Activated T-helper 1 cell treated with anti-CD3 and anti-CD28 coated beads, Interleukin-12 subunit alpha, Interleukin-12 subunit beta, Interleukin-2, Interleukin-4 antibody, amounts not matched to agents 30 ng/mL and 10 ng/mL and 1 ng/mL, durations not matched to agents 14 hours and 24 hours and 36 hours (primary cell): ENCODE measurements at regions of chr5 and their contacts with region 1.

Region 1: DNA sequence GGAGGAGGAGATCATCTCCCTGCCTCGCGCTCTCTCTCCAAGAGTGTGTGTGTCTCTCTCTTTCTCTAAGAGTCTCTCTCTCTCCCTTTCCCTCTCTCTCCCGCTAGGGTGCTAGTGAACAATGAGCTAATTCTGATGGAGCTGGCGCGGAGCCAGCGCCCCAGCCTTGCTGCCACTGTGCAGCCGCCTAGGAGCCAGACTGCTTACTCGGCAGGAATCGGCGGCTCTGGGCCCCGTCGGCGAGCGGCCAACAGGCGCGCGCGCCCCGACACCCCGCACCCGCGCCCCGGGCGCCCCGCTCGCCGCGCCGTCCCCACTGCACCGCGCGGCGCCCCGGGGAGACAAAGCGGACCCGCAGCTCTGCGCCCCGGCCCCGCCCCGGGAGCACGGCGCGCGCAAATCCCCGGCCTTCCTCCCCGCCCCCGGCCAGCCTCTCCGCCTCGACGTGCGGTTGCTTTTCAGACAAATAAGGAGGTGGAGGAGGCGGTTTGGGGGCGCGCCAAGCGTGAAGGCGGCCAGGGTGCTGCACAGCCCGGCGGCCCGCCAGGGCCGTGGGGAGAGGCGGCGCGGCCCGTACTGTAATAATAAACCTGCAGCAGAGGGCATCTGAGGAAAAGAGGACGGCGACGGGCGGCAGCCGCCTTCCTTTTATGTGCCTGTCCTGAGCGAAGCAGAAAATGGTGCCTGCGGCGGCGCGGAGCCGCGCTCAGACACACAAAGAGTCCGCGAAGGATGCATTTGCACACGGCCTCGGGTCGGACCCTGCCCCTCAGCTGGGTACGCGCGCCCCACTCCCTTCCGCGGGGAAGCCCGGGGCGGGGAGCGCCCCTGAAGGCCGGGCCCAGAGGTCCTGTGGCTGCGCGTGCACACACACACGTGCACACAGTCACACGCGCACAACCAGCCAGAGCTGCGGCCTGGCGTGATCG is 625 bp upstream of the NREP start:
- DNase-seq: peak; percentile 84
- H3K4me3 Mint-ChIP-seq: peak overlapping the region; percentile 87
- H3K27ac Mint-ChIP-seq: peak overlapping the region; percentile 86
- H3K4me1 Mint-ChIP-seq: peaks cover 29% of the 10 kb centered on the region
- H3K27me3 Mint-ChIP-seq: peaks cover 4% of the 10 kb centered on the region

Region 2: DNA sequence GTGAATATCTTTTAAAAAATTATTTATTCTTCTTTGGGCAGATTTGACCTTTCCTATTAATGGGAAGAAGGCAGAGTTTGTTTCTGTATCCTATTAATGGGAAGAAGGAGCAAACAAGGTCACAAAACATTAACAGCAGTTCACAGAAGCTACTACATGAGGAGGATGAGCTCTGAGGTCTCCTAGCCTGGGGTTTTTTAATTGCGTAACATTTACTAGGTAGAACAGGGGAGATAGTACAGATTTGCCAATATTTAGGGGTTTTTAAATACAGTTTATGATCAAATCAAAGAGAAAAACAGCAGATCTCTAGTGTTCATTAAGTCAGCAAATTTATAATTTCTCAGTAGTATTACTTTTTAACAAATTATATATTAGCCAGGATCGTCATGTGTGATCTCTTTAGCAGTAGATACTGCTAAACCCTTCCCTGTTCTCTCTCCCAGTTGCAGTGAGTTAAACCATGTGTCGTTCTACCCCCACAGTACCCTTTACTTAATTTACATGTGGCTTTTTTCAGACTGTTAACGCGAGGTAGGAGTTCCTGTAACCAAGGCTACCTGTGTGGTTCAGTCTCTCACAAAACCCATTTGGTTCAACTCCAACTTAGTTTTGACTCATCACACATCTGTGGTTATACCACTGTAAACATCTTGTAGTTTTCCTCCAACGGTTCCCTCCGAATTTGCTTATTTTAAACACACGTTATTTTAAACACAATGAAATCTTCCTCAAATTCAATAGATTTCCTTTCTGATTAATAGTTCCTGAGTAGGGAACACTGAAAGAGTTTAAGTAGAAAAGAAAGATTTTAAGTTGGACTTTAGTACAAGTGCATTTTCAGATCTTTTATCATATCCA is 1005.5 kb before region 1 on chr5:
- intact Hi-C with region 1: loop called (anchors 5 kb)
- DNase-seq: peak; percentile 52
- H3K4me3 Mint-ChIP-seq: peak overlapping the region; percentile 64
- H3K27ac Mint-ChIP-seq: peak overlapping the region; percentile 92
- H3K4me1 Mint-ChIP-seq: peaks cover 60% of the 10 kb centered on the region
- H3K27me3 Mint-ChIP-seq: no peaks in the 10 kb centered on the region

Region 3: DNA sequence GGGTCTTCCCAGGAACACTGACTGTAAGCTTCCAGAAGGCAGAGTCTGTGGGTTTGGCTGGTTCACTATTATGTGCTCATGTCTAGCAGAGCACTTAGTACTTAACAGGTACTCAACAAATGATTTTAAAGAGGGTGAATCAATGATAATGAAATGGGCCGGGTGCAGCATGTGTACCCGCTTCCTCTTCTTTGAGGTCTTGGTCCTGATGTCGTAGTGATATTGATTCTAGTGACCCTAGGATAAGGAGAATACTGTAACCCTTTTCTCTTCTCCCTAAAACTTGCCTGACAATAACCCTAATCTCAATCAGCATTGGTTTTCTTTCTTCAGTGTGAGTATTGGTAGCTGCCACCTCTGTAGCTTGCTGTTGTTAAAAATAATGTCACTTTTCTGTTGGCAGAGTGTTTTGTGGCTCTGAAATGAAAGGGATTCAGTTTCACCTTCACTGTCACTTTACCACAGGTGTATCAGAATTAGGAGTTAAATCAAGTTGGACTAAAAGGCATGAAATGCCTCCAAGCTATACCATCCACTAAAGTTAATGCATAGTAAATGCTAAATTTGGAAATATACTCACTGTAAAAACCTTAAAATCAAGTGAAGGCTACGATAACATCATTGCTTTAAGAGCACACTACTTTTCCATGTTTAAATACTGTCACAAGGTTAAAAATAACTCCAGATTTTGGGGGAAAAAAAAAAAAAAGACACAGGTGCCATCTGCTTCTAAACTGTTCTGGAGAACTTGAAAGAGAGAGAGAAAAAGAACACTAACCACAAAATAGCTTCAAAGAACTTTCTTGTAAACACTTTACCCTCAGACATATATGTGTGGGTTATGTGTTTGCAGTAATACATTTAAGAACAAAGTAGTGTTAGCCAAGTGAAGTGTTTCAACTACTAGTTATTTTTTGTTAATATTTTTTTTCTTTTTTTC is 527.5 kb before region 1 on chr5:
- intact Hi-C with region 1: loop called (anchors 5 kb)
- DNase-seq: no peak
- H3K4me3 Mint-ChIP-seq: peak overlapping the region; percentile 79
- H3K27ac Mint-ChIP-seq: peak overlapping the region; percentile 96
- H3K4me1 Mint-ChIP-seq: peaks cover 97% of the 10 kb centered on the region
- H3K27me3 Mint-ChIP-seq: no peaks in the 10 kb centered on the region

Region 4: DNA sequence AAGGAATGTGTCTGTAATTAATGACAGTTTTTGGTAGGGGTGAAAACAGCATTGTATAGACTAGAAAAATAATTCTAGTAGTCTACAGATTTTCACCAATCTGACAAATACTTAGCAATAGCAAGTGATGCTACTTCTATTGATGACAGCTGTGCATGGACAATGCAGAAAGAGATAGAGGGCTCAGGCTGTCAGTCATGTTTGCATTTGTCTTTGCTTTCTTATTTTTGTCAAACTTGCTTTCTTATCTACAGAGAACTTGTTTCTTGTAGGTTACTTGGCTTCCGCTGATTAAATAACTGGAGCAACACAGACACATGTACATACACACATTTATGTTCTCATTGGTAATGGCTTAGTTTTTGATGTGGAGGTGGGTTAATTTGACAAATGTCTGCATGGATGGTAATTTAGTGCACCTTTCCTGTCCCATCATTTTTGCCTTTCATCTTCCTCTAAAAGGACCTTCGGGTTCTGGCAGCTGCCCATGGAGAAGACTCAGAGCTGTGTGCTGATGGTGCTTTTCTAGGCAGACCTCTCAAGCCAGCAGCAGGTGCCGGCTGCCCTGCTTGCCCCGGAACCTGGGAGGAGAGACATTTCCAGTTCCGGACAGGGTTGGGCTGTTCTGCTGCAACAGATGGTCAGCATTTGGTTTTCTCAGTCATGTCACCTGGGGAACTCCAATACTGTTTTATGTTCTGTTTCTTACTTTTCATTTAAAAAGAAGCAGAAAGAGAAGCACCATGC is 504.6 kb before region 1 on chr5:
- intact Hi-C with region 1: no loop called
- DNase-seq: no peak
- H3K4me3 Mint-ChIP-seq: peak overlapping the region; percentile 41
- H3K27ac Mint-ChIP-seq: peak overlapping the region; percentile 78
- H3K4me1 Mint-ChIP-seq: peaks cover 81% of the 10 kb centered on the region
- H3K27me3 Mint-ChIP-seq: no peaks in the 10 kb centered on the region

Region 5: DNA sequence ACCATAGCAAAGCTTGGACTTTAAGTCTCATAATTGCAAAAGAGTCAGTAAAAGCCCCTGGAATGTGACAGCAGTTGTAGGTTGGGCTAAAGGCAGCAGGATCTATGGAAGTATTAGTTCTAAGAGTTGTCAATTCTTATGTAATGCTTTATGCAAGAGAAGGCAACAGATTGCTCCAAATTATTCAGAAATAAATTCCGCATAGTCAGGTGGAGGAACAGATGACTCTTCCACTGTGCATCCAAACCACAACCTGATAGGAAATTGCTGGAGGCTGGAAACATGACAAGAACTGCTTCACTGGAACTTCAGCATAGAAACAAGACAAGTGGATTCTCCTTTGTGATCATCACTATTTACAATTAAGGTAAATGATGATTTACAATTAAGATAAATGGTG is 346.3 kb before region 1 on chr5:
- intact Hi-C with region 1: no loop called
- DNase-seq: no peak
- H3K4me3 Mint-ChIP-seq: no peak overlapping the region
- H3K27ac Mint-ChIP-seq: no peak overlapping the region
- H3K4me1 Mint-ChIP-seq: no peaks in the 10 kb centered on the region
- H3K27me3 Mint-ChIP-seq: no peaks in the 10 kb centered on the region

Region 6: DNA sequence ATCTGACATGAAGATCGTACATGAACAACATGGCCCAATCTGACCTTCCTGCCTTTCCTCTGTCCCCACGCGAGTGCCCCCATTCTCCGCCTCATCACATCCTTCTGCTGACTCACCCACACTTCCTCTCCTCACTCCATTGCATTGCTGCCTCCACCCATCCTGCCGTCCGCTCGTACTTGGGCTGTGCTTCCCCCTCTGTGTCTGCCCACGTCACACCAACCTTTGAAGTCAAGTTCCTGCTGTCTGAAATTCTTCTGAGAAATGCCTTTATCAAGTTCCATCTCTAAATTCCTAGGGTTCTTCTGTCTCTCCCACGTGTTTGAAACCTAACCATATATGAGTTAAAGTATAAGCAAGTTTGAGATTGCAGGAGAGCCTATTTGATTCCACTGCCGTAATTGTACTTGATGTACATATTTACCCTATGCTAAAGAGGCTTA is 227.3 kb before region 1 on chr5:
- intact Hi-C with region 1: loop called (anchors 5 kb)
- DNase-seq: peak; percentile 82
- H3K4me3 Mint-ChIP-seq: peak overlapping the region; percentile 38
- H3K27ac Mint-ChIP-seq: peak overlapping the region; percentile 89
- H3K4me1 Mint-ChIP-seq: peaks cover 33% of the 10 kb centered on the region
- H3K27me3 Mint-ChIP-seq: no peaks in the 10 kb centered on the region

Region 7: DNA sequence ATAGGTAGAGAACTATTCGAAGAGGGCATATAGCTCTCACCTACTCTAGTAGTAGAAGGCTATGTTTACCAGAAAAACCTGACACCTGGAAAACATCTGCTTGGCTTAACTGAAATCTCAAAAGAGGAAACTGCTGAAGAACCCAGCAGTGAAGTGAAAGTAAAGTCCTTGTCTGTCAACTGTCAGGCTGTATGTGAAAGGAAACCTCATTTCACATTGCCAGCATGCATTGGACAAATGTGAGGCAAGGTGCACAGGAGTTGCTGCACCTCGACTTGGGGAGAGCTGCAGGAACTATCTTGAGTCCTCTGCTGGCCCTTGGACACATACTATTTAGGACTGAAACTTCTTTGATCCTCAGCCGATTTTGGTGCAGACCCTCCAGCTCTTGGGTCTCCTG is 54.0 kb before region 1 on chr5:
- intact Hi-C with region 1: no loop called
- DNase-seq: peak; percentile 2
- H3K4me3 Mint-ChIP-seq: peak overlapping the region; percentile 11
- H3K27ac Mint-ChIP-seq: no peak overlapping the region
- H3K4me1 Mint-ChIP-seq: peaks cover 23% of the 10 kb centered on the region
- H3K27me3 Mint-ChIP-seq: peaks cover 2% of the 10 kb centered on the region

Region 8: GRCh38 chr5:111742177-111742994 is 15.2 kb before region 1 on chr5:
- intact Hi-C with region 1: loop called (anchors 1 kb)
- DNase-seq: no peak
- H3K4me3 Mint-ChIP-seq: peak overlapping the region; percentile 40
- H3K27ac Mint-ChIP-seq: peak overlapping the region; percentile 7
- H3K4me1 Mint-ChIP-seq: peaks cover 53% of the 10 kb centered on the region
- H3K27me3 Mint-ChIP-seq: no peaks in the 10 kb centered on the region

Region 9: DNA sequence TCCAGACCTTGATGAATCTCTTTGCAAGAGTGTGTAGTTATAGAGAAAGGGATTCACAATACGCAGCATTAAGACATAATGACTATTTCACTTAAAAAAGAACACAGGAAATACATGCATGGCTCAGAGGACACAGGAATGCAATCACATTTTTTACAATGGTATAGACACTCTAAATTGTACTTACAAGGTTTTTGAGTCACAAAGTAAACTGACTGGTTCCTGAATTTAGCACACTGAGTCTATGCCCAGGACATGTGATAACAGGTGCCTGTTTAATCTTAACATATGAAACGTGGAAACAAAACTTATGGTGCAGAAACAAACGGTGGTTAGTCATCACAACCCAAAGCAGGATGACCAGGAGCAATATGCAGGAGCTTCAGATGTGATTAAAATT is 654.7 kb after region 1 on chr5:
- intact Hi-C with region 1: no loop called
- DNase-seq: no peak
- H3K4me3 Mint-ChIP-seq: no peak overlapping the region
- H3K27ac Mint-ChIP-seq: no peak overlapping the region
- H3K4me1 Mint-ChIP-seq: no peaks in the 10 kb centered on the region
- H3K27me3 Mint-ChIP-seq: peaks cover 33% of the 10 kb centered on the region